ENCODE measurements at regions of chr20 and their contacts with region 1.

Region 1: GRCh38 chr20:56411759-56412472 is at the start of gene CASS4:
- DNase-seq: peak; percentile 59
- ATAC-seq: peak; percentile 57
- H3K4me3 Mint-ChIP-seq: peak within 1 kb of the TSS; percentile 74
- H3K27ac Mint-ChIP-seq: peak within 1 kb of the TSS; percentile 95
- H3K4me1 Mint-ChIP-seq: peaks cover 48% of the 10 kb centered on the region
- H3K27me3 Mint-ChIP-seq: no peaks in the 10 kb centered on the region
- CTCF ChIP-seq: no peak
- total RNA-seq, gene CASS4: 3.5 to 3.7 TPM

Region 2: GRCh38 chr20:56392282-56393137 is 19.4 kb before region 1 on chr20 and contains the start of gene CSTF1:
- CTCF ChIA-PET with region 1: interaction called, 5 read pairs
- POLR2A ChIA-PET with region 1: interaction called, 16 read pairs
- intact Hi-C with region 1: no loop called
- DNase-seq: peak; percentile 99
- ATAC-seq: peak; percentile 92
- H3K4me3 Mint-ChIP-seq: no peak within 1 kb of the TSS
- H3K27ac Mint-ChIP-seq: no peak within 1 kb of the TSS
- H3K4me1 Mint-ChIP-seq: peaks cover 31% of the 10 kb centered on the region
- H3K27me3 Mint-ChIP-seq: no peaks in the 10 kb centered on the region
- CTCF ChIP-seq: no peak
- total RNA-seq, gene CSTF1: 63.4 to 66.2 TPM

Region 3: GRCh38 chr20:56400090-56400542 is 11.8 kb before region 1 on chr20:
- CTCF ChIA-PET with region 1: interaction called, 11 read pairs
- POLR2A ChIA-PET with region 1: interaction called, 5 read pairs
- intact Hi-C with region 1: no loop called
- DNase-seq: peak; percentile 80
- ATAC-seq: peak; percentile 68
- H3K4me3 Mint-ChIP-seq: no peak overlapping the region
- H3K27ac Mint-ChIP-seq: peak overlapping the region; percentile 30
- H3K4me1 Mint-ChIP-seq: peaks cover 30% of the 10 kb centered on the region
- H3K27me3 Mint-ChIP-seq: no peaks in the 10 kb centered on the region
- CTCF ChIP-seq: peak; percentile 87

Region 4: DNA sequence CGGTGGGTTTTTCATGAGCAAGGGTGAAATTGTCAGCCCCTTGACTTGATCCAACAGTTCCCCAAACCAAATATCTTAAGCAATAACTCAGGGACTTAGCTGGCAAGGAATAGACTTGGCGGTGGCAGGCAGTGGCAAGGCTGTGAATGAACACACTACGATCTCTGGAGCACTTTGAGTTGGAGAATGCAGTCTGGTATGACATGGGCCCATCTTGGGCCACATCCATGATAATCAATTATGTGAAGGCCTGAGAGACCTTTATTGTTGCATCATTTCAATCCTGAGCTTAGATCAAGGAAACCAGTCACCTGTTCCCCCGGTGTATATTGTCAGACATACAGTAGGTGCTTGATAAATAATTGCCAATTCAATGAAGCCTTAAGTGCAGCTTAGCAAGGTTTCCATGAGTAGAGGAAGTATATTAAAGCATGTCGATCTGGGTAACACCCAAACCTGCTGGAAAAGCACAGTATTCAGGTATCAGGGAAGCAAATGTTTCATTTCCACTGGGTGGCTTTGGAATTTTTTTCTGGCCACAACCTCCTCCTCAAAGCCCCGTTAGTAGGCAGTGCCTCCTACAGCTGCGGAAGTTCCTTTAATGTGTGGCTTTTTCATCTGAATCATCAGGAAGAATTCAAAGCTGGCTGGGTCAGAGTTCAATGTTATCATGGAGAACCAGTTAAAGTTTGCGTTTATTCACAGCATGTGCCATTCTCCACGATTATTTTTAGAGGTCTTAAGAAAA is 10.3 kb after region 1 on chr20:
- CTCF ChIA-PET with region 1: interaction called, 35 read pairs
- POLR2A ChIA-PET with region 1: interaction called, 16 read pairs
- intact Hi-C with region 1: no loop called
- DNase-seq: no peak
- ATAC-seq: no peak
- H3K4me3 Mint-ChIP-seq: peak overlapping the region; percentile 1
- H3K27ac Mint-ChIP-seq: peak overlapping the region; percentile 76
- H3K4me1 Mint-ChIP-seq: peaks cover 74% of the 10 kb centered on the region
- H3K27me3 Mint-ChIP-seq: no peaks in the 10 kb centered on the region
- CTCF ChIP-seq: no peak

Region 5: DNA sequence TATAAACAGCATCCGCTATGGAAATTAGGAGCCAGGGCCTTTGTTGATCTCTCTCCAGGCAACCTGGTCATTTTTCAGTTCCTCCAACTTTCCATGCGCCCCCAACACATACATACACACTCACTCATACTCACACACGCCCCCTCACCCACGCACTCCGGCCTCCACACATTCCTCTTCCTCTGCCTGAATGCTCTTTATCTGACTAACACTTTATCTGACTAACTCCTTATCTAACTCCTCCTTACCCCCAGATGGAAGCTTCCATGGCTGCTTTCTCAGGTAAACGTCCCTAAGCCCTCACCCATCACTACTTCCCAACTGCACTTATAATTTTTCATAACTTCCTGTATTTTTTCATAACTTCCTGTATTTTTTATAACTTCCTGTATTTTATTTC is 17.6 kb after region 1 on chr20:
- CTCF ChIA-PET with region 1: interaction called, 35 read pairs
- POLR2A ChIA-PET with region 1: interaction called, 16 read pairs
- intact Hi-C with region 1: no loop called
- DNase-seq: peak; percentile 78
- ATAC-seq: peak; percentile 54
- H3K4me3 Mint-ChIP-seq: peak overlapping the region; percentile 69
- H3K27ac Mint-ChIP-seq: peak overlapping the region; percentile 95
- H3K4me1 Mint-ChIP-seq: peaks cover 76% of the 10 kb centered on the region
- H3K27me3 Mint-ChIP-seq: no peaks in the 10 kb centered on the region
- CTCF ChIP-seq: no peak

Region 6: DNA sequence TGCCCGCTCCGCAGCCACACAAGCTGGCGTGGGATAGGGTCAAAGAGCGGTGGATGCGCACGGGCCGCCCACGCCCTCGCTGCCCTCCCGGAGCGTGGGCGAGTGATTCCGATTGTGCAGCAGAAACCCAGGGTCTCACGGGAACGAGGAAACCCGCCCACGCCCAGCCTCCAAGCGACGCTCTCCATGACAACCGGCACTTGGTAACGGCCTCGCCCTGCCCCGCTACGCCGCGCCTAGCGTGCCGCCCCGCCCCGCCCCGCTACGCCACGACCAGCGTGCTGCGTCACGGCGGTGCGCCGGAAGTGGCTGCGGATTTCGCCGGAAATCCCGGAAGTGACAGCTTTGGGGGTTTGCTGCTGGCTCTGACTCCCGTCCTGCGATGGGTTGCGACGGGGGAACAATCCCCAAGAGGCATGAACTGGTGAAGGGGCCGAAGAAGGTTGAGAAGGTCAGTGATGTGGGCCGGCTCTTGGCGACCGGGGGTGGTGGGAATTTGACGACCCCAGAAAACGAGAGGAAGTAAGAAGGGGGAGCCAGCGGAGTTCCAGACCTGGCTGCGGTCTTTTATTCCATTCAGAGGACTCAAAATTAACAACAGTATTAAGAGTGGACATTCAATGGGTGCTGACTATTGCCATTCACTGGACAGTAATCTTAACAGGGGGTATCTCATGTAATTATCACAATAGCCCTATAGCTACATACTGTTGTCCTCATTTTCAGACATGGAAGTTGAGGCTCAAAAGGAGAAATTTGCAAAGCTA is 56.6 kb after region 1 on chr20 and contains the start of gene RTF2:
- CTCF ChIA-PET with region 1: interaction called, 4 read pairs
- POLR2A ChIA-PET with region 1: interaction called, 5 read pairs
- intact Hi-C with region 1: loop called (anchors 5 kb)
- DNase-seq: peak; percentile 98
- ATAC-seq: peak; percentile 98
- H3K4me3 Mint-ChIP-seq: peak within 1 kb of the TSS; percentile 100
- H3K27ac Mint-ChIP-seq: peak within 1 kb of the TSS; percentile 100
- H3K4me1 Mint-ChIP-seq: peaks cover 37% of the 10 kb centered on the region
- H3K27me3 Mint-ChIP-seq: no peaks in the 10 kb centered on the region
- CTCF ChIP-seq: no peak
- total RNA-seq, gene RTF2: 72.0 to 76.7 TPM

Measured in activated CD8-positive, alpha-beta T cell treated with anti-CD3 and anti-CD28 coated beads for 36 hours (primary cell).